PC-3 (cell line): ENCODE measurements at regions of chr5 and their contacts with region 1.

Region 1: GRCh38 chr5:120823328-120823727 is 359.2 kb downstream of the PRR16 start:
- DNase-seq: no peak
- ATAC-seq: no peak
- H3K4me3 ChIP-seq: no peak overlapping the region
- H3K27ac ChIP-seq: no peak overlapping the region
- H3K4me1 ChIP-seq: no peaks in the 10 kb centered on the region
- H3K27me3 ChIP-seq: no peaks in the 10 kb centered on the region
- CTCF ChIP-seq: no peak

Region 2: GRCh38 chr5:121090822-121091221 is 267.5 kb after region 1 on chr5:
- CTCF ChIA-PET with region 1: no interaction called
- POLR2A ChIA-PET with region 1: no interaction called
- intact Hi-C with region 1: no loop called
- DNase-seq: no peak
- ATAC-seq: no peak
- H3K4me3 ChIP-seq: no peak overlapping the region
- H3K27ac ChIP-seq: no peak overlapping the region
- H3K4me1 ChIP-seq: no peaks in the 10 kb centered on the region
- H3K27me3 ChIP-seq: no peaks in the 10 kb centered on the region
- CTCF ChIP-seq: no peak

Region 3: GRCh38 chr5:121144764-121145163 is 321.4 kb after region 1 on chr5:
- CTCF ChIA-PET with region 1: no interaction called
- POLR2A ChIA-PET with region 1: no interaction called
- intact Hi-C with region 1: loop called (anchors 10 kb)
- DNase-seq: peak; percentile 51
- ATAC-seq: peak; percentile 58
- H3K4me3 ChIP-seq: no peak overlapping the region
- H3K27ac ChIP-seq: no peak overlapping the region
- H3K4me1 ChIP-seq: no peaks in the 10 kb centered on the region
- H3K27me3 ChIP-seq: no peaks in the 10 kb centered on the region
- CTCF ChIP-seq: peak; percentile 29; the same call in 1 of the 2 replicates